ENCODE measurements at regions of chr22 and their contacts with region 1.

Region 1: DNA sequence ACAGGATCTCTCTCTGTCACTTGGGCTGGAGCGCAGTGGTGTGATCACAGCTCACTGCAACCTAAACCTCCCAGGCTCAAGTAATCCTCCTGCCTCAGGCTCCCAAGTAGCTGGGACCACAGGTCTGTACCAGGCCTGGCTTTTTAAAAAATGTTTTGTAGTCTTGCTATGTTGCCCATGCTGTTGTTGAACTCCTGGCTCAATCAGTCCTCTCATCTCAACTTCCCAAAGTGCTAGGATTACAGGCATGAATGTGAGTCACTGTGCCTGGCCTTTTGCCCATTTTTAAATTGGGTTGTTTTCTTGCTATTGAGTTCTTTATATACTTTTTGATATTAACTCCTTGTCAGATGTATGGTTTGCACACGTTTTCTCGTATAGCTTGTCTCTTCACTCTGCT is 33.0 kb upstream of the PITPNB start:
- DNase-seq: no peak
- H3K4me3 ChIP-seq: no peak overlapping the region
- H3K27ac ChIP-seq: no peak overlapping the region
- H3K4me1 ChIP-seq: no peaks in the 10 kb centered on the region
- CTCF ChIP-seq: no peak

Region 2: DNA sequence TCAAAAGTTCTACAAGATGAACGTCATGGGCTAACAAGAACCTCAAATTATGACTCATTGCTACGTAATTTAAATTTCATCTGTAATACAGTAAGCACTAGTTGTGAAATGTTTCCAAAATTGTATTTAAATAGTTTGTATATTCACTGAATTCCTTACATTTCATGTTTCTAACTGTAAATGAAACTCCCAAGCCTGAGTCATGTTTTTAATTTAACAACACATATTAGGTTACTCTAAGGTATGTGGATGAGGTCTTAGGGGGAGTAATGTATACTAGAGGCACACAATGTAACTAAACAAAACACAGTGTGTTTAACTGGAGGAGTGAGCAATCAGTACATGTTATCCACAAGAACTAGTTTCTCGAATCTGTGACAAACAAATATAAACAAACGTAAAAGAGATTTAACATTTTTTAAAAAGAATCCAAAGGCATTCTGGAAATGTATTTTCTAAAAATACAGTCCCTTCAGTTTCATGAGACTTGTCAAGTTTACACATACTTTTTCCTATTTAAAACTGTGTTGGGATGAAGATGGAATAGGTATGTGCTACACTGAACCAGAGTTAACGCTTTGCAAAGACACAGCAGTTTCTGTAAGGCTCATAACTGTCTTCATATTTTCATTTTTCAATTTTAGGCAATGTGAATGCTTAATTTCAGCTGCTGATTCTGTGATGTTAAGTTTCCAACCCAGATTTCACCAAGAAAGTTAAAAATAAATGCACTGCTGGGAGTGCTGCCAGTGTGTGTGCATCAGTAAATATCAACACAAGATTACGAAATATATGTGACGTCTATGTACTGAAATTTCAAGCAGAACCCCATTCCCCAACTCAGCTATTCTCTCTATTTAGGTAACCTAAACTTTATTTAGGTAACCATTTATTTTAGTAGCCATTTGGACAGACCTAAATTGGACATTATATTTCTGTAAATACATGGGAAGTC is 85.7 kb before region 1 on chr22:
- CTCF ChIA-PET with region 1: no interaction called
- POLR2A ChIA-PET with region 1: no interaction called
- intact Hi-C with region 1: no loop called
- DNase-seq: no peak
- H3K4me3 ChIP-seq: no peak overlapping the region
- H3K27ac ChIP-seq: no peak overlapping the region
- H3K4me1 ChIP-seq: peaks cover 12% of the 10 kb centered on the region
- CTCF ChIP-seq: no peak

Region 3: DNA sequence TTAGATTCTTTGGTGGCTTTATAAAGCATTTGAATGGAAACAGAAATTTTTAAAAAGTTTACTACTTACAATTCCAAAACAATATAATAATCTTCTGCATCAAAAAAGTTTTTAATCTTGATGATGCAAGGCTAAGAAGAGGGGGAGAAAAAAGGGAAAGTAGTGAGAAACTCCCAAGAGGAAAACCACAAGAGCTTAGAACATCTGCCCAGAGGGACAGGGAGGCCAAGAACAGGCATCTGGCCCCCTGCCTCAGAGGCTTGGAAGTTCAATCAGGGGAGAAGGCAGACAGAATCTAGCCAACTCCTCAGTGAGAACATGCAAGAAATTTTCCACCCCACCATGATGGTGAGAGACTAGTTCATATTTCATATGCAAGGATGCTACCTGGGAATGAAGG is 751.3 kb after region 1 on chr22:
- CTCF ChIA-PET with region 1: no interaction called
- POLR2A ChIA-PET with region 1: no interaction called
- intact Hi-C with region 1: loop called (anchors 5 kb)
- DNase-seq: no peak
- H3K4me3 ChIP-seq: no peak overlapping the region
- H3K27ac ChIP-seq: no peak overlapping the region
- H3K4me1 ChIP-seq: peaks cover 12% of the 10 kb centered on the region
- CTCF ChIP-seq: no peak